Ascending aorta (tissue), 2 donors: ENCODE measurements at regions of chr17 and their contacts with region 1.

Region 1: DNA sequence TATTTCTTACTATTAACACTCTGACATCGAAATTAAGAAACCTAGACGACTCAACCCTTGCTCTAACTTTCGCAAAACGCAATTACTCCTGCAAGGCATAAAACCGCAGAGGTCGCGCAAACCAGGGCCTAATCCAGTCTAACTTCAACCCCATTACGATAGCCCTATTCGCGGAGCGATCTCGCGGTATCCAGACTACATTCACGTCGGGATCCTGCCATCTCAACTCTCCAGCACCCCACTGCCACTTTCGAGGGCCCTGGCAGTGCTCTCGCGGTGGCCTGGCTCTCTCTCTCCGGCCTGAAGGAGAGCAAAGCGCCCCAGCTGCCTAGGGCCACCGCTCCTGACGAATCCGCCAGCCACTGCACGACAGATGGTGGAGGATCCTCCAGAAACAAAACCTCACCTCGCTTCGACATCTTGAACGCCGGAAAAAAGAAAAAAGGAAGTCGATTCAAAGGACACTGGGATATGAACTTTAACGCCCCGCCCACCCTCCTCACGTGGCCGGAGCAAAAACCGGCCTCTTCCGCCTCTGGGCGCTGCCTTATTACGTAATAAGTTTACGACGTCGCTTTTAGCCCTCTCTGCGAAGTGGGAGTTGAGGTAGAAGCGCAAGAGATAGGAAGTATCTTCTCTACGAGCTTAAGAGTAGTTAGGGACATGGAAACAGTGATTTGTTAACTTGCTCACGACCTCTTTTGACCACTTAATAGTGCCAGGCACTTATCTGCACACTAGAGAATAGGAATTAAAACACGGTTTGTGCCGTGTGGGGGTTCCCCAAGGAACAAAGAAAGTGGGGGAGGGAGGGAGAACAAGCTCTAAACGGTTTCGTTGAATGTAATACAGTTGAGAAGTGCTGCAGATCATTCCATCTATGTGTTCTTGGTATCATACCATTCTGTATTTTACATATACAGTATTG is at the start of gene RPL23:
- DNase-seq: peak; percentile 81 to 97
- H3K4me3 ChIP-seq: peak within 1 kb of the TSS; percentile 70 to 80
- H3K27ac ChIP-seq: peak within 1 kb of the TSS; percentile 87 to 91
- H3K4me1 ChIP-seq: peaks cover 13 to 19% of the 10 kb centered on the region in 2 donors
- H3K27me3 ChIP-seq: no peaks in the 10 kb centered on the region
- CTCF ChIP-seq: no peak
- total RNA-seq, gene RPL23: 1,091 TPM

Region 2: DNA sequence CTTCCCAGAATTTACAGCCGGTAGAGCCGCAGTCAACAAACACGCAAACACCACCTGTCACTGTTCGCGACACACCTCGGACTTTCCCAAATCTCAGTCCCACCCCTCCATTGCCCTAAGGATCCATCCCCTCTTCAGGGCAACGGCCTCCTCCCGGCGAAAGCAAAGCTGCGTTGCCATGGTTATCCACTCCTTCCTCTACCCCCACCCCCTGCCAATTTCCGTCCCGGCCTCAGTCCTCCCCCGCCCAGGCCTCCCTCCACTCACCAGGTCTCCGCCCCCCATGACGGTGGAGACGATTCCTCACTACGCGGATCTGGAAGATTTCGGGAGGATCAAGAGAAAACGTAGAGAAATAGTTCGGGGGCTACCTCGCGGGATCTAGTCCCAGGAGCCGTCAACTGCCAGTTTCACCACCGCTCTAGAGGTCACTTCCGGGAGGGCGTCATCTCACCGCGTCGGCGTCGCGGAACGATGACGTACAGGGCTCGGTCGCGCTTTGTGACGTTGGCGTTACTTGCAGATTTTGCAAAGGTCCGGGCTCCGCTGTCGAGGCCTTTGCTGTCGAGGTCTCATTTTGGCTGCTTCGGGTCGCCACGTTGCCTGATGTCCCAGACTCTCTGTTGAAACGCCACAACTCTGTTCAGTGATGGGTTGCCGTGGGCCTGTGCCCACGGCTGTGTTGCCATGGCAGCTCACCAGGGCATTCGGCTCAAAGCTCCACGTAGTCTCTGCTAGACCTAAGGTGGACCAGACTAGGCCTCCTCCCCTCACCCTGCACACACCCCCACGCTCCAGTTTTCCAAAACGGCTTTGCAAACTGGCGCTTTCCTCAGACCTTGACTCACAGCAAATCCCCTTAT is 28.4 kb before region 1 on chr17 and contains the start of gene CWC25:
- intact Hi-C with region 1: loop called (anchors 1 kb)
- DNase-seq: peak; percentile 84 to 98
- H3K4me3 ChIP-seq: peak within 1 kb of the TSS; percentile 81 to 82
- H3K27ac ChIP-seq: peak within 1 kb of the TSS; percentile 93 to 99
- H3K4me1 ChIP-seq: peaks cover 12 to 14% of the 10 kb centered on the region in 2 donors
- H3K27me3 ChIP-seq: no peaks in the 10 kb centered on the region
- CTCF ChIP-seq: no peak
- total RNA-seq, gene CWC25: 65.2 TPM